ENCODE measurements at regions of chr22 and their contacts with region 1.

Region 1: GRCh38 chr22:39283322-39284004 is 36.0 kb downstream of the RPL3 start:
- DNase-seq: peak; percentile 80 to 94
- ATAC-seq: peak; percentile 69 to 77
- H3K4me3 ChIP-seq: no peak overlapping the region
- H3K27ac ChIP-seq: peak overlapping the region; percentile 86 to 92 (median 90)
- H3K4me1 ChIP-seq: peaks cover 19 to 22% of the 10 kb centered on the region in 2 donors
- H3K27me3 ChIP-seq: no peaks in the 10 kb centered on the region
- CTCF ChIP-seq: no peak
- POLR2A ChIP-seq: peak in 1 of 2 donors; percentile 35

Region 2: GRCh38 chr22:39055658-39056057 is 227.8 kb before region 1 on chr22:
- in situ Hi-C with region 1: no loop called
- intact Hi-C with region 1: no loop called
- DNase-seq: no peak
- ATAC-seq: no peak
- H3K4me3 ChIP-seq: no peak overlapping the region
- H3K27ac ChIP-seq: no peak overlapping the region
- H3K4me1 ChIP-seq: no peaks in the 10 kb centered on the region
- H3K27me3 ChIP-seq: peaks cover 0 to 8% (median 0%) of the 10 kb centered on the region in 3 donors
- CTCF ChIP-seq: no peak
- POLR2A ChIP-seq: no peak

Region 3: DNA sequence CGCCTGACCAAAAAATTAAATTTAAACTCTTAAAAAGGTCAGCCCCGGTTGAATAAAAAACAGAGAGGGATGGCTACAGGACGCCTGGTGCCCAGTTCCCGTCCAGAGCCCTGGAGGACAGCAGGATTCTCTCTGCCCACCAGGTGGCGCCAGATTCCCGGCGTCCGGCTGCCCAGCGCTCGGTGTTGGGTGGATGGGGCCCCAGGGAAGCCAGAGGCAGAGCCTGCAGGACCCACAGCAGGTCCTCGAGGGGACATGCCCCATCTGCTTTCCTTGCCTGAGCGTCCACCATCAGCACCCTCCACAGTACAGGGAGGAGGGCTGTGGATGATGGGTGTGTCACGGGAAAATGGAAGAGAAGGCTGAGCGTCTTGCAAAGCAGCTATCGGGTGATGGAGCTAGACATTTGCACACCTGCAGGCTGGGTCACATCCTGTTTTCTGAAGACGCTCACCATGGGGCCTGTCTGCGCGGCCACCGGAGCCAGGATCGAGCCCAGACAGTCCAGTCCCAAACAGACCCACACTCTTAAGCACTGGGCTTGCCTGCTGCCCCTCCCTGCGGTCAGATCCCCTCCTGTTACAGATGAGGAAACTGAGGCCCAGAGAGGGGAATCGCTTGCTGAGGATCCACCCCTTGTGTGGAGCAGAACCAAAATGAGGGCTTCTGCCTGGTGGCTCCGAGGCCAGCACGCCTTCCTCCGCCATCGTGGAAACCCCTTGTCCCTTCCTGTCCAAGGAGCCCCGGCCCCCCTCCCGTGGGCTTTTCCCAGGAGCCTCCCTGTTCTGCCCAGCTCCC is 112.4 kb before region 1 on chr22:
- in situ Hi-C with region 1: no loop called
- intact Hi-C with region 1: loop called (anchors 1 kb)
- DNase-seq: peak; percentile 48 to 72
- ATAC-seq: peak; percentile 81 to 87
- H3K4me3 ChIP-seq: peak overlapping the region in 1 of 4 donors; percentile 21
- H3K27ac ChIP-seq: peak overlapping the region in 3 of 4 donors; percentile 23 to 70 (median 32)
- H3K4me1 ChIP-seq: peaks cover 45 to 53% of the 10 kb centered on the region in 2 donors
- H3K27me3 ChIP-seq: no peaks in the 10 kb centered on the region
- CTCF ChIP-seq: peak; percentile 89 to 99 (median 98)
- POLR2A ChIP-seq: no peak

Region 4: DNA sequence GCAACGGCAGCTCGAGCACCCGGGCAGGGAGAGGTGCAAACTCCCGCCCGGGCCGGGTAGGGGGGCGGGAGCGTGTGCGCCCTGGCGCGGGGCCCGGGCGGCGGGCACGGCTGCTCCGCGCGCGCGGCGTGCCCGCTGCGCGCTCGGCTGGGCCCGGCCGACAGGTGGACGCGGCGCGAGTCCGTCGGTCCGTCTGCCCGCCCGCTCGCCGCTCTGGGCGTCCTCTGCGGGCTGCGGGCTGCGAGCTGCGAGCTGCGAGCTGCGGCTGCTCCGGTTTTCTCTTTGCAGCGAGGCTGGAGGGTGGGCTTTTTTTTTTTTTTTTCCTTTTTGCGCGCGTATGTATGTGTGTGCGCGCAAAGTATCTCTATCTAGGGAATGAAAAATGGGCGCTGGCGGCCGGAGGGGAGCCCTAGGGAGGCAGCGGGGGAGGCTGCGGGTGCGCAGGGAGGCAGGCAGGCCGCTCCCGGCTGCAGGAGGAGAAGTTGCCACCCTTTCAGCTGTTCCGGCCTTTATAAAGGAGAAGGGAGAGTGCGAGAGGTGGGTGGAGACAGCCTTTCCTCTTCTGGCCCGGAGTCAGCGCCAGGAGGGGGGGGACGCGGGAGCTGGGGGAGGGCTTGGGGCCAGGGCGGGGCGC is 38.9 kb before region 1 on chr22 and contains the start of gene PDGFB:
- in situ Hi-C with region 1: no loop called
- intact Hi-C with region 1: loop called (anchors 2 kb)
- DNase-seq: no peak
- ATAC-seq: peak in 1 of 2 donors; percentile 25
- H3K4me3 ChIP-seq: peak within 1 kb of the TSS; percentile 54 to 83 (median 62)
- H3K27ac ChIP-seq: peak within 1 kb of the TSS; percentile 91 to 97 (median 92)
- H3K4me1 ChIP-seq: peaks cover 33 to 48% of the 10 kb centered on the region in 2 donors
- H3K27me3 ChIP-seq: no peaks in the 10 kb centered on the region
- CTCF ChIP-seq: peak in 1 of 5 experiments; percentile 15
- POLR2A ChIP-seq: peak; percentile 38 to 41
- total RNA-seq, gene PDGFB: 6.0 to 20.0 (median 8.9) TPM

Region 5: DNA sequence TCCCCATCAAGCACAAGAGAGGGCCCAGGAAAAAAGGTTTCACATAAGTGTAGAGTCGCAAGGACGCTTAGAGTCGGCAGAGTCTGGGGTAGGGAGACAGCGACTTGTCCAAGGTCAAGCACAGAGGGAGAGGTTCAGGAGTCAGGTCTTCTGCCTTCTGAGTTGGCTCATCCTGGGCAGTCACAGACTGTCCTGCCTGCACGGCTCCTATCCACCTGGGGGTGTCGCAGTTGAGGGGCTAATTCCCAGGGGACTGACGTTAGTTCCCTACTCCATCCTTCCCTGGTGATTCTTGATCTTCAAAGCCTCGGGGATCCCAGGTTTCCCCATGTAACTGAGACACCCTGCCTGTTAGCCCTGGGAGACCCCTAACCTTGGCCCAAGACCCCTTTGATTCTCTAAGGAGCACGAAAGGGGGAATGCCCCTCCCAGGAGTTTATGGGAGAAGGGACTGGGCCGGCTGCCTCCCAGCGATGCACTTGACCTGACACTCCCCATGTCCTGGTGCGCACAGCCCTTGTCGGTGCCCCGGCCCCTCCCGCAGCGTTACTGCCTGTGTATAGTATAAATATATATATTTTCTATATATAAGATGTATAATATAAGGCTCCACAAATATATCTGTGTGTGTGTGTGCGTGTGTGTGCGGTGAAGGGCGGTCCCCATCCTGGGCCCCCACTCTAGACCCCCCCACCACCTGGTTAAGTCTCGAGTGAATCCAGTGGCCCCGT is 101.5 kb after region 1 on chr22:
- in situ Hi-C with region 1: no loop called
- intact Hi-C with region 1: no loop called
- DNase-seq: peak in 1 of 2 donors; percentile 32
- ATAC-seq: peak in 1 of 2 donors; percentile 58
- H3K4me3 ChIP-seq: no peak overlapping the region
- H3K27ac ChIP-seq: no peak overlapping the region
- H3K4me1 ChIP-seq: peaks cover 0 to 5% of the 10 kb centered on the region in 2 donors
- H3K27me3 ChIP-seq: peaks cover 3 to 23% (median 18%) of the 10 kb centered on the region in 3 donors
- CTCF ChIP-seq: peak in 2 of 5 experiments; percentile 16 to 35
- POLR2A ChIP-seq: no peak

Measured in gastrocnemius medialis (tissue), 4 donors.